A549 (cell line): ENCODE measurements at regions of chr1 and their contacts with region 1.

Region 1: DNA sequence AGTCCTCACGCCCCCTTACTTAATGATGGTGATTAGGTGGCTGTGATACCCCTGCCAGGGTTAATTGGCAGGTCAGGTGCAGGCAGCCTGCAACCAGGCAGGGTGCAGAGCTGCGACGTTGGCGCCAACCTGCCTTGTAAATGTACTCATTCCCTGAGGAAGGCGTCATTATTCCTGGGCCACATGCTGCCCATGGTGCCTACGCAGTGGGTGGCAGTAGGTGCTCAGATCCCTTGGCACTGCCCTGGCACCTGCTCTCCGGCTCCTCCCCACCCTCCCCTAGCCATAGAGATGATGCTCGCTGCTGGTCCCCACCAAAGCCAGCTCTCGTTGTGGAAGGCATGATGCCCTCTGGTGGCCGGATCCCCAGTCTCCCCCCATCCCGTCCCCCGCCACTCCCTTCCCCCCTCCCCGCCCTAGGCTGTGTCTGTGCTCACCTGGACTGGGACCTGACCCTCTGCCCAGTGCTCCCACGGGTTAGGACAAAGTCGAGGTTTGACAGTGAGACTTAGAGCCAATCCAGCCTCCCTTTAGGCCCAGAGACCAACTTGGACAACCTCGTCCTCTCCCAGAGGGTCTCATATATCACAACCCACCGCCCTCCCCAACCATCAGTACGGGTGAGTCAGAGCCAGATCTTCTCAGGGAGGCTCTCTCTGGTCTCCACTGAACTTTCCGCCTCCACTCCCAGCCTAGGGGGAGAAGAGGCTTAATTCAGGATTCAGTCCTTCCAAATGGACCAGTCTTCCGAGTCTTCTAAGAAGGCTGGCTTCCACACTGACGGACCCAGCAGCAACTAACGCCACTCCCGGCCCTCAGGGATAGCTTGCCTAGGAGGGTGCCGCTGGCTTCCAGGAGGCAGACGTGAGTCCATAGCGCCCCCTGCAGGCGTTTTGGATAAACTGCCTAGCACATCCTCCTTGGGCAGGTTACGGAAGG is 5.7 kb downstream of the KRTCAP2 start:
- DNase-seq: peak; percentile 77 to 91
- ATAC-seq: peak; percentile 84 to 90
- H3K4me3 ChIP-seq: peak overlapping the region; percentile 34
- H3K27ac ChIP-seq: peak overlapping the region; percentile 62 to 81
- H3K4me1 ChIP-seq: peaks cover 12% of the 10 kb centered on the region
- CTCF ChIP-seq: peak; percentile 94
- EP300 ChIP-seq: no peak
- POLR2A ChIP-seq: no peak
- RAD21 ChIP-seq: peak; percentile 93 to 98

Region 2: GRCh38 chr1:155044812-155045690 is 122.4 kb before region 1 on chr1:
- CTCF ChIA-PET with region 1: interaction called, 16 read pairs
- POLR2A ChIA-PET with region 1: no interaction called
- DNase-seq: peak; percentile 88
- ATAC-seq: peak; percentile 93 to 96
- H3K4me3 ChIP-seq: no peak overlapping the region
- H3K27ac ChIP-seq: peak overlapping the region; percentile 69 to 86
- H3K4me1 ChIP-seq: peaks cover 35% of the 10 kb centered on the region
- CTCF ChIP-seq: peak; percentile 73
- EP300 ChIP-seq: no peak
- POLR2A ChIP-seq: no peak
- RAD21 ChIP-seq: peak; percentile 75 to 81

Region 3: GRCh38 chr1:155105604-155106022 is 61.8 kb before region 1 on chr1:
- CTCF ChIA-PET with region 1: interaction called, 175 read pairs
- POLR2A ChIA-PET with region 1: no interaction called
- DNase-seq: no peak
- ATAC-seq: no peak
- H3K4me3 ChIP-seq: no peak overlapping the region
- H3K27ac ChIP-seq: no peak overlapping the region
- H3K4me1 ChIP-seq: no peaks in the 10 kb centered on the region
- CTCF ChIP-seq: no peak
- EP300 ChIP-seq: no peak
- POLR2A ChIP-seq: no peak
- RAD21 ChIP-seq: no peak

Region 4: GRCh38 chr1:155135415-155136028 is 31.9 kb before region 1 on chr1 and contains the start of gene SLC50A1:
- CTCF ChIA-PET with region 1: interaction called, 202 read pairs
- POLR2A ChIA-PET with region 1: interaction called, 4 read pairs
- DNase-seq: peak; percentile 91 to 93
- ATAC-seq: peak; percentile 76 to 88
- H3K4me3 ChIP-seq: peak within 1 kb of the TSS; percentile 60
- H3K27ac ChIP-seq: peak within 1 kb of the TSS; percentile 90 to 92
- H3K4me1 ChIP-seq: peaks cover 34% of the 10 kb centered on the region
- CTCF ChIP-seq: no peak
- EP300 ChIP-seq: no peak
- POLR2A ChIP-seq: peak; percentile 77
- RAD21 ChIP-seq: no peak
- polyA plus RNA-seq, gene SLC50A1: 39.3 and 39.4 TPM in 2 replicates

Region 5: DNA sequence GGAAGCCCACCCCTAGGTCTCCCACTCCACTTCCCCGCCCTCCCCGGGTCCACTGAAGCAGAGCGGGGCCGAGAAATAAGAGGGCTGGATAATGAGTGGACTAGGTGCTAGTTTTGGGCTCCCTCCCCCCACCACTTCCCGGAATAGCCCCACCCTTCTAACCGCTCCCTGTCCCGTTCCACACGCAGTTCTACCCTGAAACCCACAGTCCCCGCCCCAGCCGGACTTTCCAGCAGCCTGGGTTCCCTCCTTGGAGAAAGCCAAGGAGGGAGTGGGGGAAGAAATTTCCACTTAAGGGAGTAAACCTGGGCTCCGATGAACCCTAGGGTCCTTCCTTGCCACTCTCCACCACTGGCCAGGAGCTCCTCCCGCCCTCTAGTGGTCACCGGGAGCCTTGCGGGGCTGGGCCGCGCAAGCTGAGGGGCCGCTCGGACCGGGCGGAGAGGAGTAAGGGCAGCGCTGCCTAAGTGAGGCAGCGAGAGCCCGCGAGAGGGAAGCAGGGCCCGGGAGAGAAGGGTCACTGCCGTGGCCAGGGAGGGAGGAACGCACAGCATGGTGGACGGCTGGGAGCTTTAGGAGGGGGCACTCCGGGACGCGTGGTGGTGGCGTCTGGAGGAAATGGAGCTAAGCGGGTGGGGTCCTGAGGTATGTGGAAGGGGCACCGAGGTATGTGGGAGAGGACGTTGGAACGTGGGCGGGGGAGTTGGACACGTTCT is 26.0 kb after region 1 on chr1:
- CTCF ChIA-PET with region 1: interaction called, 176 read pairs
- POLR2A ChIA-PET with region 1: interaction called, 54 read pairs
- DNase-seq: peak; percentile 84 to 93
- ATAC-seq: peak; percentile 76 to 90
- H3K4me3 ChIP-seq: peak overlapping the region; percentile 79
- H3K27ac ChIP-seq: peak overlapping the region; percentile 84 to 96
- H3K4me1 ChIP-seq: peaks cover 22% of the 10 kb centered on the region
- CTCF ChIP-seq: peak; percentile 95
- EP300 ChIP-seq: no peak
- POLR2A ChIP-seq: peak; percentile 49; the same call in 1 of the 2 replicates
- RAD21 ChIP-seq: peak; percentile 59 to 64; a peak in 4 of 5 replicates